B cell (primary cell): ENCODE measurements at regions of chr19 and their contacts with region 1.

Region 1: GRCh38 chr19:20278342-20278741 is 111.3 kb downstream of the ZNF486 start:
- DNase-seq: peak; percentile 63
- ATAC-seq: peak; percentile 66
- H3K4me3 ChIP-seq: no peak overlapping the region
- H3K4me3 Mint-ChIP-seq: no peak overlapping the region
- H3K27ac ChIP-seq: no peak overlapping the region
- H3K27ac Mint-ChIP-seq: no peak overlapping the region
- H3K4me1 ChIP-seq: peaks cover 3 to 14% of the 10 kb centered on the region in 2 donors
- H3K4me1 Mint-ChIP-seq: peaks cover 34% of the 10 kb centered on the region
- H3K27me3 ChIP-seq: no peaks in the 10 kb centered on the region
- H3K27me3 Mint-ChIP-seq: no peaks in the 10 kb centered on the region
- CTCF ChIP-seq: peak; percentile 74

Region 2: GRCh38 chr19:18763674-18764588 is 1514.4 kb before region 1 on chr19:
- CTCF ChIA-PET with region 1: no interaction called
- POLR2A ChIA-PET with region 1: no interaction called
- intact Hi-C with region 1: no loop called
- DNase-seq: no peak
- ATAC-seq: peak; percentile 49
- H3K4me3 ChIP-seq: no peak overlapping the region
- H3K4me3 Mint-ChIP-seq: no peak overlapping the region
- H3K27ac ChIP-seq: no peak overlapping the region
- H3K27ac Mint-ChIP-seq: peak overlapping the region; percentile 20
- H3K4me1 ChIP-seq: peaks cover 0 to 9% of the 10 kb centered on the region in 2 donors
- H3K4me1 Mint-ChIP-seq: no peaks in the 10 kb centered on the region
- H3K27me3 ChIP-seq: no peaks in the 10 kb centered on the region
- H3K27me3 Mint-ChIP-seq: no peaks in the 10 kb centered on the region
- CTCF ChIP-seq: no peak

Region 3: DNA sequence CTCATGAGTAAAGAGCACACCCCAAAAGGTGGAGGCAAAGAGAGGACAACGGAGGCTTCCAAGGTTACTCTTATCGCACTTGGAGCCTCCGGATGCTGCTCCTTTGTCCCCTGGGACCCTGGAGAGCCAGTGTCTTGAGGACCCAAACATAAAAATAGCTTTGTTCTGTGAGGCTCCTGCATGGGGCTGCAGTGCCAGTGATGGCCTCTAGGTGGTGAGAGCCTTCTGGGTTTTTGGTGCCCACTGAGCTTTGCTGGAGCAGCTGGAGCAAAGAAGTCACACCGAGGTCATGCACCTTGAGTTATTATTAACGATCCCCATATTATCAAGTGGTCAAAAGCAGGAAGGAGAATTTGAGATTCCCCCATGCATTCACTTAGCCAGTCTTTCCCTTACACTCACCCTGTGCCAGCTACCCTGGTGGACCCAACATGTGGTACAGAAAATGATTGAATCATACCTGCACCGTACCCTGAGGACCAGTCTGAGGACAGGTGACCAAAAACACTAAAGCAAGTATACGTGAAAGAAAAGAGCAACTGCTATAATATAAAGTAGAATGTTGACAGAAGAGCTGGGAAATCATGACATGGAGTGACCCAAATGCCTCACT is 280.6 kb before region 1 on chr19:
- CTCF ChIA-PET with region 1: interaction called, 37 read pairs
- POLR2A ChIA-PET with region 1: no interaction called
- intact Hi-C with region 1: no loop called
- DNase-seq: peak; percentile 57
- ATAC-seq: peak; percentile 43
- H3K4me3 ChIP-seq: no peak overlapping the region
- H3K4me3 Mint-ChIP-seq: no peak overlapping the region
- H3K27ac ChIP-seq: no peak overlapping the region
- H3K27ac Mint-ChIP-seq: no peak overlapping the region
- H3K4me1 ChIP-seq: no peaks in the 10 kb centered on the region
- H3K4me1 Mint-ChIP-seq: no peaks in the 10 kb centered on the region
- H3K27me3 ChIP-seq: no peaks in the 10 kb centered on the region
- H3K27me3 Mint-ChIP-seq: no peaks in the 10 kb centered on the region
- CTCF ChIP-seq: peak; percentile 87

Region 4: GRCh38 chr19:20237761-20238623 is 40.4 kb before region 1 on chr19:
- CTCF ChIA-PET with region 1: interaction called, 4 read pairs
- POLR2A ChIA-PET with region 1: interaction called, 3 read pairs
- intact Hi-C with region 1: loop called (anchors 5 kb)
- DNase-seq: peak; percentile 91
- ATAC-seq: peak; percentile 85
- H3K4me3 ChIP-seq: peak overlapping the region; percentile 58 to 89 (median 82)
- H3K4me3 Mint-ChIP-seq: peak overlapping the region; percentile 100
- H3K27ac ChIP-seq: peak overlapping the region; percentile 22 to 73
- H3K27ac Mint-ChIP-seq: peak overlapping the region; percentile 87
- H3K4me1 ChIP-seq: peaks cover 3 to 22% of the 10 kb centered on the region in 2 donors
- H3K4me1 Mint-ChIP-seq: peaks cover 29% of the 10 kb centered on the region
- H3K27me3 ChIP-seq: no peaks in the 10 kb centered on the region
- H3K27me3 Mint-ChIP-seq: no peaks in the 10 kb centered on the region
- CTCF ChIP-seq: no peak